Cardiac septum (tissue), 1 donor: ENCODE measurements at regions of chr15 and their contacts with region 1.

Region 1: DNA sequence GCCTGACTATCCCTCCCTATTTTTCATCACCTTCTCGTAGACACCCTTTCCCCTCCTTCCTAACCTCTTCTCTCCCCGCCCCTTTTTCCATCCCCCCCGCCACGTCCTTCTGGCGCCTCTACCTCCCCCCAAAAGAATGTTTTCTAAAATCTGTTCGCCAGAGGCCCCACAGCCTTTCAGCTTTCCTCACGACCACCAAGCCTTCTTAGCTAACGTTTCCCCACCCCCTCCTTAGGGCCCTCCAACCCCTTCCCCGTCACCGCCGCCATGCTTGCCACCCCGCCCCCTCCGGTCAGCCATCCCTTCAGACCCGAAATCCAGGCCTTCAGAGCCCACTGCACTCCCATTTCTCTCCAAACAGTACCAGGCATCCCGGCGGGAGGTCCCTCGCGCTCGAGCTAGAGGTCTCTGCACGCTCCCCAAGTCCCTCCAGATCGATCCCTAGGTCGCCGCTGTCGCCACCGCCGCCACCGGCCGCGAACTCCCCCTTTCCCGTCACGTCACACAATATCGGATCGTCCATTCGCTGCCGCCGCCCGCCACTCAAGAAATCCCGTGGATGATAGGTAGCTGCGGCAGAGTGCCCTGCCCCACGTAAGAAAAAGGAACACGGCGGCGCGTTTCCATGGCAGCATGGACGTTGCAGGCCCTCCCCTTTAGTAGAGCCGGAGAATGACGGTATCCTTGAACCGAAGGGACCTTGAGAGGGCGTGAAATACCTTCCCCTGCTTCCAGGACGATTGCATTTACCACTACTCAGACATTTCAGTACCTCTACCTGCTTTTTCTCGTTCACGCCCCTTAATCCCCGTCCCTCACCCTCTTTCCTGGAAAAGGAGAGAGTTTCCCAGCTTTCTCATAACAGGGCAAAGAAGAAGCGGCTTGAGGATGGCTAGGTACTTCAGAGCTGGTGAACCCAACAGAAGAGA is at the start of gene TP53BP1:
- DNase-seq: peak; percentile 99
- total RNA-seq, gene TP53BP1: 33.1 TPM

Region 2: GRCh38 chr15:43510200-43511011 is 17.5 kb after region 1 on chr15:
- intact Hi-C with region 1: loop called (anchors 1 kb)
- DNase-seq: peak; percentile 99